ENCODE measurements at regions of chr22 and their contacts with region 1.

Region 1: GRCh38 chr22:39170825-39171622 is 18.5 kb upstream of the CBX7 start:
- DNase-seq: peak; percentile 59 to 91
- H3K4me3 ChIP-seq: no peak overlapping the region
- H3K4me1 ChIP-seq: peaks cover 24% of the 10 kb centered on the region
- H3K27me3 ChIP-seq: 0 out of 2 replicates have a peak, but pooled peaks cover under 1% of the 10 kb centered on the region

Region 2: GRCh38 chr22:38989466-38989865 is 181.6 kb before region 1 on chr22:
- in situ Hi-C with region 1: no loop called
- DNase-seq: no peak
- H3K4me3 ChIP-seq: no peak overlapping the region
- H3K4me1 ChIP-seq: no peaks in the 10 kb centered on the region
- H3K27me3 ChIP-seq: no peaks in the 10 kb centered on the region

Region 3: DNA sequence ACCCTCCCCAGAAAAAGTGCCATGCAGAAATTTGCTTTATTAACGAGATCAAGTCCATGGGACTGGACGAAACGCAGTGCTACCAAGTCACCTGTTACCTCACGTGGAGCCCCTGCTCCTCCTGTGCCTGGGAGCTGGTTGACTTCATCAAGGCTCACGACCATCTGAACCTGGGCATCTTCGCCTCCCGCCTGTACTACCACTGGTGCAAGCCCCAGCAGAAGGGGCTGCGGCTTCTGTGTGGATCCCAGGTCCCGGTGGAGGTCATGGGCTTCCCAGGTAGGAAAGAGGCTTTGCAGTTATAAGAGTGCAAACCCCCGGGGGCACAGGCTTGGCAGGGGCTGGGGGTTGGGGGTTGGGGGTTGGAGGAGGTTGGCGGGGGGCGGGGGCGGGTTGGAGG is 69.8 kb before region 1 on chr22:
- in situ Hi-C with region 1: no loop called
- DNase-seq: no peak
- H3K4me3 ChIP-seq: no peak overlapping the region
- H3K4me1 ChIP-seq: peaks cover 4% of the 10 kb centered on the region
- H3K27me3 ChIP-seq: no peaks in the 10 kb centered on the region

Region 4: DNA sequence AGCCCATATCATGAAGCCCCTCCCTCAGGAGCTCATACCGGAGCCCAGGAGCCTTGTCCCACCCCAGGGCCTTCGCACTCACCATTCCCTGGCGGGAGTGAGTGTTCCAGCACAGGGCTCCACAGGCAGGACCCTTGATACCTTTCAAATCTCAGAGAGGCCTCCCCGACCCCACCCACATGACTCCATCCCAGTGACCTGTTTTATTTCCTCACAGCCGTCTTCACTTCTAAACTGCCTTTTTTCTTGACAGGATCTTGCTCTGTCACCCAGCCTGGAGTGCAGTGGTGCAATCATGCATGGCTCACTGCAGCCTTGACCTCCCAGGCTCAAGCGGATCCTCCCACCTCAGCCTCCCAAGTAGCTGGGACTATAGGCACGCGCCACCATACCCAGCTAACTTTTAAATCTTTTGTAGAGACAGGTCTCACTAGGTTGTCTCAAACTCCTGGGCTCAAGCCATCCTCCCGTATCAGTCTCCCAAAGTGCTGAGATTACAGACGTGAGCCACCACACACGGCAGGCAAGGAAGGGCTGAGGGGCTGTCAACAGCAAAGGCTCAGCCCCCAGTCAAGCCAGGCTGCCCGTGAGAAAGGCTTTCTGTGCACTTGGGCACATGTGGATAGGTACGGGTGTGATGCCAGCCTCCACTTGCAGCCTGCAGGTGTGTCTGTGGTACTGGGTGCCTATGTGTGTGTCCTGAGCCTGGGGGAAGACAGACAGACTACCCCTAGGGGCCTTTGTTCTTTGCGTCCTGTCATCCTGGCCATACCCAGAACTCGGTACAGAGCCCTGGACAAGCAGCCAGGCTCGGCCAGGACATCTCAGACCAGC is 139.1 kb after region 1 on chr22:
- in situ Hi-C with region 1: loop called (anchors 5 kb)
- DNase-seq: peak in 1 of 2 experiments; percentile 42
- H3K4me3 ChIP-seq: no peak overlapping the region
- H3K4me1 ChIP-seq: no peaks in the 10 kb centered on the region; the same call in 1 of the 2 replicates
- H3K27me3 ChIP-seq: no peaks in the 10 kb centered on the region

Region 5: DNA sequence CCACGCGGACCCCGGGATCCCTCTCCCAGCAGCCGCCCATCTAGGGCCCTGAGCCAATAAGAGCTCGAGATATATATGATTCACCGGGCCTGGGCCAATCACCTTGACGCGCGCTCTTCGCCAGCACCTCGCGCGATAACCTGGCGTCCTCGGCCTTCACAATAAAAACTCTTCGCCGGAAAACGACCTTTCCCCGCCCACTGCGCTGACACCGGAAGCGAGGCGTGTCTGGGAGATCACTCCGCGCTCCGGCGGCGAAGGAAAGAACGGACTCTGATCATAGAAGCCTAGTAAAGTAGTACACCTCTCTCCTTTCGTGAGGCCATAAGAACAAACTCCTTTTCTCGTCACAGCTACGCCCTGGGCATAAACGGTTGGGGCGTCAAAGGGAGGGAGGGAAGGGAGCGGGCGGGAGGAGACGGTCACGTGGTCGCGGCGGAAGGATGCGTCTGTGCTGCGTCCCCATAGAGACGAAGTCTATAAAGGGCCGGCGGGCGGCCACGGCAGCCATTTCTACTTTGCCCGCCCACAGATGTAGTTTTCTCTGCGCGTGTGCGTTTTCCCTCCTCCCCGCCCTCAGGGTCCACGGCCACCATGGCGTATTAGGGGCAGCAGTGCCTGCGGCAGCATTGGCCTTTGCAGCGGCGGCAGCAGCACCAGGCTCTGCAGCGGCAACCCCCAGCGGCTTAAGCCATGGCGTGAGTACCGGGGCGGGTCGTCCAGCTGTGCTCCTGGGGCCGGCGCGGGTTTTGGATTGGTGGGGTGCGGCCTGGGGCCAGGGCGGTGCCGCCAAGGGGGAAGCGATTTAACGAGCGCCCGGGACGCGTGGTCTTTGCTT is 349.2 kb after region 1 on chr22 and contains the start of gene ATF4:
- in situ Hi-C with region 1: loop called (anchors 10 kb)
- DNase-seq: peak; percentile 96 to 98
- H3K4me3 ChIP-seq: peak within 1 kb of the TSS; percentile 100
- H3K4me1 ChIP-seq: peaks cover 12% of the 10 kb centered on the region
- H3K27me3 ChIP-seq: no peaks in the 10 kb centered on the region

Measured in HAP-1 (cell line).